Thyroid gland (tissue), 4 donors: ENCODE measurements at regions of chr2 and their contacts with region 1.

Region 1: GRCh38 chr2:113370478-113371091 is 66.9 kb upstream of the ZNG1B start:
- DNase-seq: peak; percentile 80 to 83
- H3K4me3 ChIP-seq: no peak overlapping the region
- H3K27ac ChIP-seq: peak overlapping the region in 2 of 3 donors; percentile 47 to 63
- H3K4me1 ChIP-seq: peaks cover 13 to 19% of the 10 kb centered on the region in 2 donors
- H3K27me3 ChIP-seq: no peaks in the 10 kb centered on the region
- CTCF ChIP-seq: peak; percentile 29 to 90 (median 76)
- POLR2A ChIP-seq: no peak

Region 2: DNA sequence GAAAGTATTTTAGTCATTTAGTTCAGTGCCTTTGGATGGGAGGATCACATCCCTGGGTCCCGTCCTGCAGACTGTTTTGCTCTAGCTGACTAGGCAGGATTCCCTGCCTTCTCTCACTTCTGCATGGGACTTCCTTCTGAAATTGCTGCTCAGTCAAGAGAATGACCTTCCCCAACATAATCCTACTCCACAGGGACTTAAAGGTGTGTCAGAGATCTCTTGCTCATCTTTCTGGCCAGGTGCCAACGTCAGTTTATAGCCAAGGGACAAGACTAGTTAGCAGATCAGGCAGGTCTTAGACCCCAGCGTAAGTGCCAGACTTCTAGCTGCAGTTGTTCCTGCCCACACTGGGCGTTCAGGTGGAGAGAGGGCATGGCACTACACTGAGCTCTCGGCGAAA is 524.6 kb before region 1 on chr2:
- intact Hi-C with region 1: no loop called
- DNase-seq: no peak
- H3K4me3 ChIP-seq: no peak overlapping the region
- H3K27ac ChIP-seq: no peak overlapping the region
- H3K4me1 ChIP-seq: no peaks in the 10 kb centered on the region
- H3K27me3 ChIP-seq: no peaks in the 10 kb centered on the region
- CTCF ChIP-seq: no peak
- POLR2A ChIP-seq: no peak

Region 3: DNA sequence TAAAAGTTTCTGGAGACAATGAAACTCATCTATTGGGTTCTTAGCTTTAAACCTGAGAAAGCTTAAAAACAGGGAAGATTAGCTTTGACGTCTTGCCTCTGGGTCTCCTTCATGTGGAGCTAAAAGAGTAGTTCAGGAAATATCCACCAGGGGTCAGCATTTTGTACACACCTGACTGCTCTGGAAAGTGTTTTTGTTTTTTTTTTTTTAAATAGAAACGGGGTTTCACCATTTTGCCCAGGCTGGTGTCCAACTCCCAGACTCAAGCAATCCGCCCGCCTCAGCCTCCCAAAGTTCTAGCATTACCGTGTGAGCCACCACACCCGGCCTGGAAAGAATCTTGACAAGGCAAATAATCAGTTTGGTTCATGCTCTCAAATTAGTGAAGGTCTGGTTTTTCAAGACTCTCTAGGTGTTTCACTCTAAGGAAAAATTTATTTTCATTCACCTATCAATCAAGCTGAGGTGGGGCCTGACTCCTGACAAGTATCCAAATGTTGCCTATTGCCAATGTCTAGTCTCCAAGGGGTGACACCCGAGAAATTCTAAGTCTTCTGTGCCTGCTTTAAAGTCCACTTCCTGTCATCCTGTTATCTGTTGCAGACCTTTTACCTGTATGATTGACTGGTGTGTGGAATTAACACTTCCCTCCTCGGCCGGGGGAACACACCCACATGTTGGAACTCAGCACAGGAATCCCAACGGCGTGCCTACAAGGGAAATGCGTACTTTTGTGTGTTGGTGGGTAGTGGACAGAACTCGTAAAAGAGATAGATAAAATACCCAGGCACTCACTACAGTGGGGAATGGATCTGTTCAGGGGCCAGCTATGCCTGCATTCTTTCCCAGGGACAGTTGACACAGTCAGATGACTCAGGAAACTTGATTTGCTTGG is 231.9 kb before region 1 on chr2:
- intact Hi-C with region 1: loop called (anchors 10 kb)
- DNase-seq: peak; percentile 70 to 74
- H3K4me3 ChIP-seq: no peak overlapping the region
- H3K27ac ChIP-seq: peak overlapping the region; percentile 63 to 79 (median 73)
- H3K4me1 ChIP-seq: peaks cover 6 to 17% of the 10 kb centered on the region in 2 donors
- H3K27me3 ChIP-seq: no peaks in the 10 kb centered on the region
- CTCF ChIP-seq: peak; percentile 56 to 95 (median 82)
- POLR2A ChIP-seq: no peak

Region 4: GRCh38 chr2:113203901-113204519 is 166.6 kb before region 1 on chr2:
- intact Hi-C with region 1: loop called (anchors 10 kb)
- DNase-seq: peak; percentile 77 to 83
- H3K4me3 ChIP-seq: no peak overlapping the region
- H3K27ac ChIP-seq: peak overlapping the region; percentile 3 to 72 (median 32)
- H3K4me1 ChIP-seq: peaks cover 36 to 73% of the 10 kb centered on the region in 2 donors
- H3K27me3 ChIP-seq: no peaks in the 10 kb centered on the region
- CTCF ChIP-seq: peak; percentile 29 to 93 (median 86)
- POLR2A ChIP-seq: no peak

Region 5: GRCh38 chr2:113248997-113249770 is 121.4 kb before region 1 on chr2:
- intact Hi-C with region 1: loop called (anchors 5 kb)
- DNase-seq: peak; percentile 75 to 78
- H3K4me3 ChIP-seq: no peak overlapping the region
- H3K27ac ChIP-seq: peak overlapping the region; percentile 55 to 83 (median 67)
- H3K4me1 ChIP-seq: peaks cover 69 to 94% of the 10 kb centered on the region in 2 donors
- H3K27me3 ChIP-seq: no peaks in the 10 kb centered on the region
- CTCF ChIP-seq: peak; percentile 56 to 82 (median 72)
- POLR2A ChIP-seq: no peak